ENCODE measurements at regions of chr15 and their contacts with region 1.

Region 1: GRCh38 chr15:99282121-99282520 is 30.8 kb downstream of the LRRC28 start:
- DNase-seq: no peak
- ATAC-seq: no peak; the same call in 1 of the 3 replicates
- H3K4me3 ChIP-seq: no peak overlapping the region
- H3K27ac ChIP-seq: no peak overlapping the region
- H3K4me1 ChIP-seq: no peaks in the 10 kb centered on the region
- H3K27me3 ChIP-seq: no peaks in the 10 kb centered on the region
- CTCF ChIP-seq: no peak
- EP300 ChIP-seq: no peak
- POLR2A ChIP-seq: no peak
- RAD21 ChIP-seq: no peak

Region 2: DNA sequence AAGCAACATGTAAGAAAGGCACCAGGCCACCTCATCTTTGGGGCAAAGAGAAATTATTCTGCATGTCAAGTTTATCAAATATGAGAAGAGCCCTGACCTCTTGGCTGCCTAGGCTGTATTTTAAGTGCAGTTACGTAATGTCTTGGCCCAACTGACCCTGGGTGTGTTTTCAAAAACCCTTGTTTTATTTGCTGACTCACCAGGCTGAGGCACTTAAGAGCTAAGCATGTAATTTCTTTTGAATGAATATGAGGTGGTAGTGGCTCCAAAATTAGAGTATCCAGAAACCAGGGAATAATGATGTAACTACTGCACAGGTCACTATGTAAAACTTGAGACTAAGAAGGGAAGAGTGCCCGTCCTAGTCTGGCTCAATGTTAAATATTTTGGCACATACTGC is 298.8 kb before region 1 on chr15:
- CTCF ChIA-PET with region 1: no interaction called
- POLR2A ChIA-PET with region 1: no interaction called
- RAD21 ChIA-PET with region 1: no interaction called
- SMC1A ChIA-PET with region 1: no interaction called
- in situ Hi-C with region 1: no loop called
- intact Hi-C with region 1: no loop called
- DNase-seq: no peak
- ATAC-seq: no peak
- H3K4me3 ChIP-seq: no peak overlapping the region
- H3K27ac ChIP-seq: no peak overlapping the region
- H3K4me1 ChIP-seq: peaks cover 22% of the 10 kb centered on the region
- H3K27me3 ChIP-seq: no peaks in the 10 kb centered on the region
- CTCF ChIP-seq: no peak
- EP300 ChIP-seq: no peak
- POLR2A ChIP-seq: no peak
- RAD21 ChIP-seq: no peak

Region 3: GRCh38 chr15:99371180-99372103 is 89.3 kb after region 1 on chr15:
- CTCF ChIA-PET with region 1: interaction called, 27 read pairs
- POLR2A ChIA-PET with region 1: no interaction called
- RAD21 ChIA-PET with region 1: interaction called, 11 read pairs
- SMC1A ChIA-PET with region 1: interaction called, 32 read pairs
- in situ Hi-C with region 1: no loop called
- intact Hi-C with region 1: loop called (anchors 1 kb)
- DNase-seq: peak; percentile 63
- ATAC-seq: peak; percentile 92
- H3K4me3 ChIP-seq: no peak overlapping the region
- H3K27ac ChIP-seq: peak overlapping the region; percentile 71
- H3K4me1 ChIP-seq: peaks cover 14% of the 10 kb centered on the region
- H3K27me3 ChIP-seq: no peaks in the 10 kb centered on the region
- CTCF ChIP-seq: peak; percentile 12 to 52 (median 25); a peak in 3 of 6 replicates
- EP300 ChIP-seq: no peak
- POLR2A ChIP-seq: no peak
- RAD21 ChIP-seq: peak; percentile 77

Region 4: DNA sequence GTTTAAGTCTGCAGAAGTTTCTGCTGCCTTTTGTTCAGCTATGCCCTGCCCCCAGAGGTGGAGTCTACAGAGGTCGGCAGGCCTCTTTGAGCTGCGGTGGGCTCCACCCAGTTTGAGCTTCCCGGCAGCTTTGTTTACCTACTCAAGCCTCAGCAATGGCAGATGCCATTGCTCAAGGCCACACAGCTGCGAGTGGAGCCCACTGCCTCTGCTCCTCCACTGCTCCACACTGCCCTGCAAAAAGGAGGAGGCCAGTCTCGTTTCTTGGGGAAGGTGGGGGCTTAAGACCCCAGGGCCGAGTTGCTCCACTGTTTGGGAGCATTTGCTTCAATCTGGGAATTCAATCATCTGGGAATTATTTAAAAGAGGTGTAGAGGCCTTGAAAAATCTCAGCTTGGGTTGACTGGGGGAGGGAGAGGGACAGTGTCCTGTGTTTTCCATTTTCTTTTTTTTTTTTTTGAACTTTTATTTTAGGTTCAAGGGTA is 139.1 kb after region 1 on chr15:
- CTCF ChIA-PET with region 1: no interaction called
- POLR2A ChIA-PET with region 1: no interaction called
- RAD21 ChIA-PET with region 1: no interaction called
- SMC1A ChIA-PET with region 1: no interaction called
- in situ Hi-C with region 1: no loop called
- intact Hi-C with region 1: no loop called
- DNase-seq: no peak
- ATAC-seq: no peak
- H3K4me3 ChIP-seq: no peak overlapping the region
- H3K27ac ChIP-seq: no peak overlapping the region
- H3K4me1 ChIP-seq: peaks cover 16% of the 10 kb centered on the region
- H3K27me3 ChIP-seq: no peaks in the 10 kb centered on the region; a peak in 1 of 4 replicates
- CTCF ChIP-seq: no peak
- EP300 ChIP-seq: no peak
- POLR2A ChIP-seq: no peak
- RAD21 ChIP-seq: no peak

Region 5: GRCh38 chr15:99644913-99645542 is 362.9 kb after region 1 on chr15:
- CTCF ChIA-PET with region 1: no interaction called
- POLR2A ChIA-PET with region 1: no interaction called
- RAD21 ChIA-PET with region 1: no interaction called
- SMC1A ChIA-PET with region 1: no interaction called
- in situ Hi-C with region 1: no loop called
- intact Hi-C with region 1: no loop called
- DNase-seq: no peak
- ATAC-seq: no peak
- H3K4me3 ChIP-seq: no peak overlapping the region
- H3K27ac ChIP-seq: no peak overlapping the region
- H3K4me1 ChIP-seq: no peaks in the 10 kb centered on the region
- H3K27me3 ChIP-seq: no peaks in the 10 kb centered on the region
- CTCF ChIP-seq: no peak
- EP300 ChIP-seq: no peak
- POLR2A ChIP-seq: no peak
- RAD21 ChIP-seq: no peak

Region 6: GRCh38 chr15:99733268-99734039 is 451.3 kb after region 1 on chr15 and contains the start of gene LYSMD4:
- CTCF ChIA-PET with region 1: interaction called, 13 read pairs
- POLR2A ChIA-PET with region 1: no interaction called
- RAD21 ChIA-PET with region 1: interaction called, 5 read pairs
- SMC1A ChIA-PET with region 1: interaction called, 13 read pairs
- in situ Hi-C with region 1: no loop called
- intact Hi-C with region 1: loop called (anchors 1 kb)
- DNase-seq: peak; percentile 58
- ATAC-seq: peak; percentile 100
- H3K4me3 ChIP-seq: peak within 1 kb of the TSS; percentile 84
- H3K27ac ChIP-seq: peak within 1 kb of the TSS; percentile 67
- H3K4me1 ChIP-seq: no peaks in the 10 kb centered on the region
- H3K27me3 ChIP-seq: no peaks in the 10 kb centered on the region
- CTCF ChIP-seq: no peak
- EP300 ChIP-seq: no peak
- POLR2A ChIP-seq: peak; percentile 83
- RAD21 ChIP-seq: no peak
- polyA plus RNA-seq, gene LYSMD4: 1.8 to 5.2 TPM

Region 7: GRCh38 chr15:99755692-99756409 is 473.7 kb after region 1 on chr15:
- CTCF ChIA-PET with region 1: interaction called, 39 read pairs
- POLR2A ChIA-PET with region 1: no interaction called
- RAD21 ChIA-PET with region 1: interaction called, 16 read pairs
- SMC1A ChIA-PET with region 1: interaction called, 9 read pairs
- in situ Hi-C with region 1: no loop called
- intact Hi-C with region 1: no loop called
- DNase-seq: peak; percentile 43
- ATAC-seq: peak; percentile 99
- H3K4me3 ChIP-seq: no peak overlapping the region
- H3K27ac ChIP-seq: no peak overlapping the region
- H3K4me1 ChIP-seq: peaks cover 5% of the 10 kb centered on the region
- H3K27me3 ChIP-seq: no peaks in the 10 kb centered on the region
- CTCF ChIP-seq: peak; percentile 80 to 91 (median 88)
- EP300 ChIP-seq: no peak
- POLR2A ChIP-seq: no peak
- RAD21 ChIP-seq: peak; percentile 96

Measured in GM12878 (cell line).